ENCODE measurements at regions of chr9 and their contacts with region 1.

Region 1: DNA sequence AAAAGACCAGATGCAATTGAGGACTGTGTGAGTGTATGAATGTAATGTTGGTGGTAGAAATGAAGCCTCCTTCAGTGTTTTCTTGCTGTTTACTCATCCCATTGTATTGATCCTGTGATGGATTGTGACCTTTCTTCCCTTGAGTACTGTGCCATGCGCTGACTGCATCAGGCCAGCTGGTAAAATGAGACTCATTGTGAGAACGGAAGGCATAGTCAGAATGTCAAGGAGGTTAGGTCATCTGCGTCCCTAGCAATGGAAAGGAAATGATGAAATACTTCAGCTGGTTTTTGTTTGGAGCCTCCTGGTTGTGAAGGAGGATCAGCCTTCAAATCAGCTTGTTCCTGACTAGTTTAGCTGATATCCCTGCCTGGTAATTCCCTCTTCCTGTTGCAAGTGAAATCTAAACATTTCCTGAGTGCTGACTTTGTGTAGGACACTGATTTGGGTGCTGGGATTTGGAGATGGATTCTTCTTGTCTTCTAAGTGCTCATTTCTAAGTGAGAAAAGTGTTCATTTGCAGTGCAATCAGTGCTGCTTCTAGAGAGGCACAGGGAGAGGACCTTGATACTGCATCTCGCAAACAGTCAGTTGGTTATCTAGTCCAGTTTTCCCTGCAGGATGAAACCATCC is 35.5 kb downstream of the TNFSF8 start:
- DNase-seq: peak; percentile 80
- H3K4me3 Mint-ChIP-seq: no peak overlapping the region
- H3K27ac Mint-ChIP-seq: peak overlapping the region; percentile 85
- H3K4me1 Mint-ChIP-seq: peaks cover 56% of the 10 kb centered on the region
- H3K27me3 Mint-ChIP-seq: no peaks in the 10 kb centered on the region

Region 2: DNA sequence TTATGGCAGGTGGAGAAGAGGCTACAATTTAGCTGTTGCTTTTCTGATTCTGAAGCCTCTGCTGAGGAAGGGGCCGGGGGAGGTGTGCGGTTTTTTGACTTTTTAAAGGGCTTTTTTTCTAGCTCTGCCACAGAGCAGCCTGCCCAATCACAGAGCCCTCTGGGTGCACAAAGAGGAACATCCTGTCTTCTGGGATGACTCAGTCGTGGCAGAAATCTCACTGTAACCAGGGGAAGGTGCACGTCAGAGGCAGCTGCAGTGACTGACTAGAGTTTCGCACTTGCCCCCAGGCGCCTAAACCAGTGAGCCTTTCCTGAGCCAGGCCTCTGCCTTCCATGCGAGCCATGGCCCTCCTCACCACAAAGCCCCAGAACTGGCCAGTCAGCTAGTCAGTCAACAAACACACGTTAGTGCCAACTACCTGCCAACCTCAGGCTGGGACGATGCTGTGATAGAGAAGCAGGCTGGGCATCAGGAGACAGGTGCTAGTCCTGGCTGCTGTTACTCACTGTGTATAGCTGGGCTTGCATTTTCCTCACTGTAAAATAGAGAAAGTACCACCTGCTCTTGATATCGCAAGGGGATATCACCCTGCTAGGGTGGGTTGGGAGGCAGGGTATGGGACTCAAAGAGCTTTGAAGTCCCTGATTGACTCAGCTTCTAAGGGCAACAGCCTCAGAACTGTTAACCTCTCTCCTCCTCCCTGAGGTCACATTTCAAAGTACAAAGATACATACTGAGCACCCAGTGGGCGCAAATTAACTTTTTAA is 509.3 kb before region 1 on chr9:
- CTCF ChIA-PET with region 1: no interaction called
- intact Hi-C with region 1: loop called (anchors 5 kb)
- DNase-seq: peak; percentile 97
- H3K4me3 Mint-ChIP-seq: peak overlapping the region; percentile 97
- H3K27ac Mint-ChIP-seq: peak overlapping the region; percentile 100
- H3K4me1 Mint-ChIP-seq: peaks cover 67% of the 10 kb centered on the region
- H3K27me3 Mint-ChIP-seq: no peaks in the 10 kb centered on the region

Region 3: GRCh38 chr9:114691046-114691955 is 203.6 kb before region 1 on chr9:
- CTCF ChIA-PET with region 1: interaction called, 4 read pairs
- intact Hi-C with region 1: loop called (anchors 1 kb)
- DNase-seq: peak; percentile 89
- H3K4me3 Mint-ChIP-seq: peak overlapping the region; percentile 8
- H3K27ac Mint-ChIP-seq: peak overlapping the region; percentile 94
- H3K4me1 Mint-ChIP-seq: peaks cover 82% of the 10 kb centered on the region
- H3K27me3 Mint-ChIP-seq: no peaks in the 10 kb centered on the region

Region 4: GRCh38 chr9:114779352-114779845 is 115.5 kb before region 1 on chr9:
- CTCF ChIA-PET with region 1: no interaction called
- intact Hi-C with region 1: no loop called
- DNase-seq: no peak
- H3K4me3 Mint-ChIP-seq: no peak overlapping the region
- H3K27ac Mint-ChIP-seq: no peak overlapping the region
- H3K4me1 Mint-ChIP-seq: peaks cover 24% of the 10 kb centered on the region
- H3K27me3 Mint-ChIP-seq: no peaks in the 10 kb centered on the region

Region 5: DNA sequence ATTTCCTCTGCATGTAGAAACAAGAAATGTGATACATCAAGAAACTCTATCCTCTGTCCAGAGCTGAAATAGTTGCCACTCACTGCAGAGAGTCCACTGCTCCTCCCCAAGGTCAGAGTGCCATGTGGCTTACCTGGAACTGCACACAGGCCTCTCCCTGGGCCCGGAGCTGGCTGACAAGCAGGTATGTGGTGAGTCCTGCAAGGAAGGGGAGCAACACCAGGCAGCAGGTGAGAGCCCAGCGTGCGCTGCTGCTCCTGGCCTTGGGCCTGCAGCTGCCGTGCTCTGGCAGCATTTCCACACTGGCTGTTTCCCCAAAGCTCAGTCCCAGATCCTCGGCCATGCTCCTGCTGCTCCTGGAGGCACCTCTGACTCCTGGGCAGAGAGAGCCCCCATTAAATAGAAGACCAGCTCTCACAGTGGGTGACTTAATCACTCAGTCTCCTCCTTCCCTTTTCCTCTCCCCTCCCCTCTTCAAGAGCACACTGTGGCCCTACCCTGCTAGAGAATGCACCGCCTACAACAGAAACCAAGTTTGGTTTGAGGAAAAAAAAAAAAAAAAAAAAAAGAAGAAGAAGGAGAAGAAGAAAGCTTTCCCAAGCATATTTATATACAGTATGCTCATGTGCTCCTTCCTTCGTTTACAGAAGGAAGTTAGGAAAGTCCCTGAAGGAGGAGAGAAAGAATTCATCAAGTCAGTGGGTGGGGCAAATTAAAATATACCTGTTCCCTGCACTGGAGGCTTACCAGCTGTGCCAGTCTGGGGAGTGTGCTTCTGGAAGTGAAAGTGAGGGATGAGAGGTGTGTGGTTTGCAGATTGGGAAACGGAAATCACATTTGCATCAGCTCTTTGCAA is 89.0 kb before region 1 on chr9 and contains the start of gene TNFSF15:
- CTCF ChIA-PET with region 1: no interaction called
- intact Hi-C with region 1: loop called (anchors 1 kb)
- DNase-seq: peak; percentile 75
- H3K4me3 Mint-ChIP-seq: peak within 1 kb of the TSS; percentile 63
- H3K27ac Mint-ChIP-seq: peak within 1 kb of the TSS; percentile 26
- H3K4me1 Mint-ChIP-seq: peaks cover 28% of the 10 kb centered on the region
- H3K27me3 Mint-ChIP-seq: no peaks in the 10 kb centered on the region
- total RNA-seq, gene TNFSF15: 0.62 to 0.74 TPM

Region 6: DNA sequence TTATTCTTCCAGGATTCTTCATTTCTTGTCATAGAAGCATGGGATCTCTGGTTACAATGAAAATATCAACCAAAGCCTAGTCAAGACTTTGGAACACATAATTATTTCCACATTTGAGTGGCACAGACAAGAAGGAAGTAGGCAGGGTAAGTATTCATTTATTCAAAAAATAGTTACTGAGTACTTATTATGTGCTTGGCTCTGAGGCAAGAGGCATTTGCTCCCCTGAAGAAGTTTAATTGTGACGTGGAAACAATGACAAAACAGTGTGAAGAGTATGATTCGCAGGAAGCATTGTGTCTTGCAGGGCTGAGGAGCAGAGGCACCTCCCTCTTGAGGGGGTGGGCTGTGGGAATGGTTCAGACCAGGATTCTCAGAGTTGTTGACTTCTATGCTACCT is 44.0 kb before region 1 on chr9:
- CTCF ChIA-PET with region 1: no interaction called
- intact Hi-C with region 1: loop called (anchors 2 kb)
- DNase-seq: peak; percentile 43
- H3K4me3 Mint-ChIP-seq: no peak overlapping the region
- H3K27ac Mint-ChIP-seq: peak overlapping the region; percentile 39
- H3K4me1 Mint-ChIP-seq: peaks cover 25% of the 10 kb centered on the region
- H3K27me3 Mint-ChIP-seq: no peaks in the 10 kb centered on the region

Region 7: DNA sequence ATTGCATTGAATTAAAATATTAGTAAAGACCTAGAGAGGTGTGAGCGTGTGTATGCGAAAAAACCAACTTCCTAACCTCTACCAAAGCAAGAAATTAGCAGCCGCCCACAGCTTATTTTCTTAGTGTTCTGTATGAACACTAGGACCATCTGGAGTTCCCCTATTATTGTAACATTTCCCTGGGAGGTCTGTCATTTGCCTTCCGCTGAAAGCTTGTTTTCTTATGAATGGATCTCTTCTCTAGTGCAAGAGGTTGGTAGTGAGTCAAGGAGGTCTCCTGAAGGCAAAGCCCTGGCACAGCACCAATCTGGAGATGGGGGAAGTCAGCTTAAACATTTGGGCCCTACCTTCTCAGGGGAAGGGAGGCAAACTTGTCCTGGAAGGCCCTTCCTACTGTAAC is 24.7 kb after region 1 on chr9:
- CTCF ChIA-PET with region 1: interaction called, 4 read pairs
- intact Hi-C with region 1: loop called (anchors 1 kb)
- DNase-seq: peak; percentile 68
- H3K4me3 Mint-ChIP-seq: peak overlapping the region; percentile 11
- H3K27ac Mint-ChIP-seq: peak overlapping the region; percentile 74
- H3K4me1 Mint-ChIP-seq: peaks cover 88% of the 10 kb centered on the region
- H3K27me3 Mint-ChIP-seq: no peaks in the 10 kb centered on the region

Region 8: GRCh38 chr9:114953917-114954316 is 59.0 kb after region 1 on chr9:
- CTCF ChIA-PET with region 1: no interaction called
- intact Hi-C with region 1: loop called (anchors 2 kb)
- DNase-seq: peak; percentile 62
- H3K4me3 Mint-ChIP-seq: no peak overlapping the region
- H3K27ac Mint-ChIP-seq: peak overlapping the region; percentile 8
- H3K4me1 Mint-ChIP-seq: peaks cover 33% of the 10 kb centered on the region
- H3K27me3 Mint-ChIP-seq: no peaks in the 10 kb centered on the region

Region 9: GRCh38 chr9:115042781-115043509 is 148.0 kb after region 1 on chr9:
- CTCF ChIA-PET with region 1: no interaction called
- intact Hi-C with region 1: no loop called
- DNase-seq: no peak
- H3K4me3 Mint-ChIP-seq: no peak overlapping the region
- H3K27ac Mint-ChIP-seq: no peak overlapping the region
- H3K4me1 Mint-ChIP-seq: peaks cover 6% of the 10 kb centered on the region
- H3K27me3 Mint-ChIP-seq: peaks cover 6% of the 10 kb centered on the region

Measured in activated naive CD4-positive, alpha-beta T cell treated with anti-CD3 and anti-CD28 coated beads for 36 hours (primary cell).